Endothelial cell of umbilical vein (primary cell): ENCODE measurements at regions of chr1 and their contacts with region 1.

Region 1: GRCh38 chr1:63691701-63692425 is 82.0 kb upstream of the ROR1 start:
- DNase-seq: peak; percentile 90
- H3K4me3 ChIP-seq: no peak overlapping the region
- H3K27ac ChIP-seq: no peak overlapping the region
- H3K4me1 ChIP-seq: no peaks in the 10 kb centered on the region
- H3K27me3 ChIP-seq: no peaks in the 10 kb centered on the region
- CTCF ChIP-seq: peak; percentile 71 to 73
- POLR2A ChIP-seq: no peak

Region 2: GRCh38 chr1:63710761-63711380 is 19.0 kb after region 1 on chr1:
- CTCF ChIA-PET with region 1: interaction called, 10 read pairs
- POLR2A ChIA-PET with region 1: no interaction called
- dilution Hi-C with region 1: no loop called
- intact Hi-C with region 1: no loop called
- DNase-seq: no peak
- H3K4me3 ChIP-seq: no peak overlapping the region
- H3K27ac ChIP-seq: no peak overlapping the region
- H3K4me1 ChIP-seq: no peaks in the 10 kb centered on the region
- H3K27me3 ChIP-seq: peaks cover 0 to 5% of the 10 kb centered on the region in 2 experiments
- CTCF ChIP-seq: no peak
- POLR2A ChIP-seq: no peak

Region 3: GRCh38 chr1:63773815-63774616 is 82.2 kb after region 1 on chr1 and contains the start of gene ROR1:
- CTCF ChIA-PET with region 1: interaction called, 54 read pairs
- POLR2A ChIA-PET with region 1: no interaction called
- dilution Hi-C with region 1: no loop called
- intact Hi-C with region 1: loop called (anchors 1 kb)
- DNase-seq: peak; percentile 86
- H3K4me3 ChIP-seq: peak within 1 kb of the TSS; percentile 62 to 73 (median 72)
- H3K27ac ChIP-seq: peak within 1 kb of the TSS; percentile 40
- H3K4me1 ChIP-seq: peaks cover 15% of the 10 kb centered on the region
- H3K27me3 ChIP-seq: peaks cover 0 to 5% of the 10 kb centered on the region in 2 experiments
- CTCF ChIP-seq: peak; percentile 42 to 80
- POLR2A ChIP-seq: no peak
- total RNA-seq, gene ROR1: 3.5 and 10.9 TPM in 2 replicates

Region 4: GRCh38 chr1:63835075-63835633 is 143.3 kb after region 1 on chr1:
- CTCF ChIA-PET with region 1: interaction called, 10 read pairs
- POLR2A ChIA-PET with region 1: no interaction called
- dilution Hi-C with region 1: no loop called
- intact Hi-C with region 1: no loop called
- DNase-seq: no peak
- H3K4me3 ChIP-seq: no peak overlapping the region
- H3K27ac ChIP-seq: no peak overlapping the region
- H3K4me1 ChIP-seq: no peaks in the 10 kb centered on the region
- H3K27me3 ChIP-seq: no peaks in the 10 kb centered on the region
- CTCF ChIP-seq: no peak
- POLR2A ChIP-seq: no peak

Region 5: DNA sequence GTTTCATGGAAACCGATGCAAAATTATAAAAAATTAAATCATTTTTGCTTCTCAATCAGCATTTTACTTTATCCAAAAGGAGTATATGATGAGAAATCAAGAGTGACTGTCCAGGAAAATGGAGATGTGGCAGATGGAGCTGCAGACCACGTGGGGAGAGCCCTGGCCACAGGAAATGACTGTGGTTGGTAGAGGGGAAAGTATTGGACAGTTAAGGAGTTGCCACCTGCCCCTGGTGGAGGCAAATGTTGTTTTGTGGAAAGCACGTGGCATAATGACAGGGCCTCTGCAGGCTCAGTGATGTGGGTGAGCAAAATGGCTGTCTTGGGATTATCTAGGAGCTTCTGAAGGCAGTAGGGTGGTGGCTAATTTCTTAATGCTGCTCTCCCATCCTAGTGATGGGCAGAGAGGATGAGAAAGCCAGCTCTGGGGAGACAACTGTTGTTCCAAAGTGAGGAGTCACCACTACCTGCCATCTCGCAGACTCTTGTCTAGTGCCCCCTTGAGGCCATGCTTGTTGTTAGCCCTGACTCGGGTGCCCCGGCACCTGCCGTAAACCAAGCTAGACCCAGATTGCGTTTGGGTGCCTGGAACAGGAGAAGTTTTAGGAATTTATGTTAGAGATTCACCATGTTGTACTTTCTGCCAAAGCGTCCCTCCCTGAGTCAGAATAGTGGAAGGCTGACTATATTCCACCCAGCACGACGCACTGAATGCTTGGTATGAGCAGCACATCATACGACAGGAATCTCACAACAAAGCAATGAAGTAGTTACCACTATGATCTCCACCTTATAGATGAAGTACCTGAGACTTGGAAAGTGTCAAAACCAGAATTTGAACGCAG is 225.9 kb after region 1 on chr1:
- CTCF ChIA-PET with region 1: interaction called, 102 read pairs
- POLR2A ChIA-PET with region 1: no interaction called
- dilution Hi-C with region 1: no loop called
- intact Hi-C with region 1: loop called (anchors 1 kb)
- DNase-seq: no peak
- H3K4me3 ChIP-seq: no peak overlapping the region
- H3K27ac ChIP-seq: no peak overlapping the region
- H3K4me1 ChIP-seq: peaks cover 17% of the 10 kb centered on the region
- H3K27me3 ChIP-seq: peaks cover 0 to 3% of the 10 kb centered on the region in 2 experiments
- CTCF ChIP-seq: peak; percentile 8 to 10
- POLR2A ChIP-seq: no peak

Region 6: GRCh38 chr1:64163970-64164369 is 472.1 kb after region 1 on chr1:
- CTCF ChIA-PET with region 1: interaction called, 38 read pairs
- POLR2A ChIA-PET with region 1: no interaction called
- dilution Hi-C with region 1: no loop called
- intact Hi-C with region 1: no loop called
- DNase-seq: peak; percentile 6
- H3K4me3 ChIP-seq: no peak overlapping the region
- H3K27ac ChIP-seq: no peak overlapping the region
- H3K4me1 ChIP-seq: no peaks in the 10 kb centered on the region
- H3K27me3 ChIP-seq: no peaks in the 10 kb centered on the region
- CTCF ChIP-seq: peak in 1 of 2 donors; percentile 9
- POLR2A ChIP-seq: no peak